AG04449 (cell line): ENCODE measurements at regions of chr17 and their contacts with region 1.

Region 1: DNA sequence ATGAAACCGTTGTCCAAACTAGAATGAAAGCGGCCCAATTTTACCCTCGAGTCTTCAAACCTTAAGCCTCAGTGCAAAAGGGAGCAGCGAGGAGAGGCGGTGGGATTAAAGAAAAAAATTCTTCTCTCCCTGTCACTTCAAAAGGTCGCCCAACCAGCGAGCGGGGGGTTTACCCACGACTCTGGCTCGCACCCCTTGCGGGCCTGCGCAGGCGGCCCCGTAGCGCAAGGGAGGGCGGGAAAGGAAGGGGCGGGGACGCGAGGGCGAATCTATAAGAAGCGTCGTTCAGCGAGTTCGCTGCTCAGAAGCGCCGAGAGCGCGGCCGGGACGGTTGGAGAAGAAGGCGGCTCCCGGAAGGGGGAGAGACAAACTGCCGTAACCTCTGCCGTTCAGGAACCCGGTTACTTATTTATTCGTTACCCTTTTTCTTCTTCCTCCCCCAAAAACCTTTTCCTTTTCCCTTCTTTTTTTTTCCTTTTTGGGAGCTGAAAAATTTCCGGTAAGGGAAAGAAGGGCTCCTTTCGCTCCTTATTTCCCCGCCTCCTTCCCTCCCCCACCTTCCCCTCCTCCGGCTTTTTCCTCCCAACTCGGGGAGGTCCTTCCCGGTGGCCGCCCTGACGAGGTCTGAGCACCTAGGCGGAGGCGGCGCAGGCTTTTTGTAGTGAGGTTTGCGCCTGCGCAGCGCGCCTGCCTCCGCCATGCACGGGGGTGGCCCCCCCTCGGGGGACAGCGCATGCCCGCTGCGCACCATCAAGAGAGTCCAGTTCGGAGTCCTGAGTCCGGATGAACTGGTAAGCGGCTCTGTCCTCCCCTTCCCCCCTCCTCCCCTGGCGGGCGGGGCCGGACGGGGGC is at the start of gene POLR2A:
- DNase-seq: peak; percentile 87
- H3K4me3 ChIP-seq: peak within 1 kb of the TSS; percentile 87
- CTCF ChIP-seq: no peak

Region 2: GRCh38 chr17:7444682-7445618 is 39.3 kb before region 1 on chr17 and contains the start of gene CHRNB1:
- CTCF ChIA-PET with region 1: interaction called, 4 read pairs
- POLR2A ChIA-PET with region 1: interaction called, 10 read pairs
- DNase-seq: no peak
- H3K4me3 ChIP-seq: peak within 1 kb of the TSS; percentile 36
- CTCF ChIP-seq: no peak

Region 3: DNA sequence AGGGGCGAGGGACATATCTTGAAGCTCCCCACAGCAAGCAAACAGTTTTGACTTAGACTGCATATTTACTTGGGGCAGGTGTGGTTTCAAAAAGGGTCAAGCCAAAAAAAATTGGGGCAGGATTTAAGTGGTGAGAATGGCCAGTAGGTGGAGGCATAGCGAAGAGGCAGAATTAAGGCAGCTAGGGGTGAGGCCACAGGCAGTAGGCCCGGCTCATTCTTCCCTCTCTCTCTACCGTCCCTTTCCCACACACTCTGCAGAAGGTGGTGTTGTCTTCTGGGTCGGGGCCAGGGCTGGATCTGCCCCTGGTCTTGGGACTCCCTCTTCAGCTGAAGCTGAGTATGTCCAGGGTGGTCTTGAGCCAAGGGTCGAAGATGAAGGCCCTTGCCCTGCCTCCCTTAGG is 148.2 kb after region 1 on chr17:
- CTCF ChIA-PET with region 1: no interaction called
- POLR2A ChIA-PET with region 1: no interaction called
- DNase-seq: no peak
- H3K4me3 ChIP-seq: no peak overlapping the region
- CTCF ChIP-seq: peak; percentile 58